Calu3 (cell line): ENCODE measurements at regions of chr20 and their contacts with region 1.

Region 1: DNA sequence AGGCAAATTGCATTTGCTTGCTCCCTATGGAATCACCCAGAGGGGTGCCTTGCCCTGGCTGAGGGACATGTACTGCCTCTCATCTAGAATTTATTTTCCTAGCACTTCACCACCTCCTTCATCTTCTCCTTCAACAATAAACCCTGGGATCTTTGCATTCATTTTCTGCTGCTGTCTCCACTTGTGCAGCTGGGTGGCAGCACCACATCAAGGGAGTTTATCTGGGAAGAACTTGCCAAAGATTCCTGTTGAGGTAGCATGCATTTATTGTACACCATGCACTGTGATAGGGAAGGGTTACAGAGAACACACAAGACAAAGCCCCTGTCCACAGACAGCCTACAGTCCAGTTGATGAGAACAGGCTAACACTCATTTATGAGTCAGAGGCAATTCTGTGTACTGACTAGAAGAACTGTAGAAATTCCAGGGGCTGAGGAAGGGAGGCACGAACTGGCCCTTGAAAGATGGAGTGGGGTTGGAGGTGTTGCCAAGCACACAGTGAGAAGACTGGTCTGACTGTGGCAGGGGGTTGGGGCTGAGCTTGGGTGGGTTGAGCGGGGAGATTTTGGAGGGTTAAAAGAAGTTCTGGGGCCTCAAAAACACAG is 17.5 kb downstream of the C20orf173 start:
- DNase-seq: peak; percentile 63
- H3K4me3 Mint-ChIP-seq: no peak overlapping the region
- H3K27ac Mint-ChIP-seq: no peak overlapping the region
- H3K4me1 Mint-ChIP-seq: peaks cover 13% of the 10 kb centered on the region
- H3K27me3 Mint-ChIP-seq: no peaks in the 10 kb centered on the region
- CTCF ChIP-seq: peak; percentile 62

Region 2: GRCh38 chr20:35525639-35526038 is 13.7 kb after region 1 on chr20:
- CTCF ChIA-PET with region 1: no interaction called
- intact Hi-C with region 1: no loop called
- DNase-seq: no peak
- H3K4me3 Mint-ChIP-seq: no peak overlapping the region
- H3K27ac Mint-ChIP-seq: no peak overlapping the region
- H3K4me1 Mint-ChIP-seq: no peaks in the 10 kb centered on the region
- H3K27me3 Mint-ChIP-seq: peaks cover 13% of the 10 kb centered on the region
- CTCF ChIP-seq: no peak

Region 3: DNA sequence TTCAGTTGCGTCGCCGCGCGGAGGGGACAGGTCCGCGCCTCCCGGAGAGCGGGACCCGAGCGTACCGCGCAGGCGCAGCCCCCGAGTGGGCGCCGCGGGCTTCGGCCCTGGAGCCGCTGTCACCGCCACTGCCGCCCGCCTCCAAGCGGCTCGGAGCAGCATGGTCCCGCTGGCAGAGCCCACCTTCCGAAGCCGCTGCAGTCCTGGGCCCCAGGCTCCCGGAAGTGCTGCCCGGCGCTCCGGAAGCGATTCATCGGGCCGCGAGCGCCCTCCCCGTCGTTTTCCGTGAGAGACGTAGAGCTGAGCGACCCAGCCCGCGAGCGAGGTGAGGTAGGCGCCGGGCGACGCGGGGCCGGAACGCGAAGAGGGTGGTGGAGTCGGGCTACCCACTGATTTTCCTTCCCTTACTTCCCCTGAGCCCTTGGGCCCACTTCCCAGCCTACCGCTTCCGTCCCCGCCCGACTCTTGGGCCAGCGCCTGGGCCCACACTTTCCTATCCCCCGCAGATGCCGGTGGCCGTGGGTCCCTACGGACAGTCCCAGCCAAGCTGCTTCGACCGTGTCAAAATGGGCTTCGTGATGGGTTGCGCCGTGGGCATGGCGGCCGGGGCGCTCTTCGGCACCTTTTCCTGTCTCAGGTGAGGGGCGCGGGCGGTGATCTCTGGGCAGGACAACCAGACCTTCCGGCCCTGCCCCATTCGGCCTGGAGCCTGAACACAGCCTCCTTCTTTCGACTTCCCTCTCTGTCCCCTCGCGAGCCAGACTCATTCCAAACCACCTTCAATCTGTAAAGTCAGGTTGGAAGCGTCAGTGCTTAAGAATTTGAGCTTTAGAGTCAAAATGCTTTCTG is 187.4 kb after region 1 on chr20 and contains the starts of genes NFS1 and ROMO1:
- CTCF ChIA-PET with region 1: no interaction called
- intact Hi-C with region 1: loop called (anchors 5 kb)
- DNase-seq: peak; percentile 91
- H3K4me3 Mint-ChIP-seq: peak within 1 kb of the TSS; percentile 90
- H3K27ac Mint-ChIP-seq: peak within 1 kb of the TSS; percentile 87
- H3K4me1 Mint-ChIP-seq: peaks cover 24% of the 10 kb centered on the region
- H3K27me3 Mint-ChIP-seq: no peaks in the 10 kb centered on the region
- CTCF ChIP-seq: no peak
- total RNA-seq, gene NFS1: 44.6 and 53.0 TPM in 2 replicates
- total RNA-seq, gene ROMO1: 230 and 267 TPM in 2 replicates